ENCODE measurements at regions of chr7 and their contacts with region 1.

Region 1: GRCh38 chr7:154927624-154928143 is 75.2 kb downstream of the PAXIP1 start:
- DNase-seq: peak; percentile 88
- ATAC-seq: peak; percentile 69
- H3K4me3 Mint-ChIP-seq: peak overlapping the region; percentile 96
- H3K27ac Mint-ChIP-seq: peak overlapping the region; percentile 92
- H3K4me1 Mint-ChIP-seq: peaks cover 25% of the 10 kb centered on the region
- H3K27me3 Mint-ChIP-seq: peaks cover 6% of the 10 kb centered on the region

Region 2: DNA sequence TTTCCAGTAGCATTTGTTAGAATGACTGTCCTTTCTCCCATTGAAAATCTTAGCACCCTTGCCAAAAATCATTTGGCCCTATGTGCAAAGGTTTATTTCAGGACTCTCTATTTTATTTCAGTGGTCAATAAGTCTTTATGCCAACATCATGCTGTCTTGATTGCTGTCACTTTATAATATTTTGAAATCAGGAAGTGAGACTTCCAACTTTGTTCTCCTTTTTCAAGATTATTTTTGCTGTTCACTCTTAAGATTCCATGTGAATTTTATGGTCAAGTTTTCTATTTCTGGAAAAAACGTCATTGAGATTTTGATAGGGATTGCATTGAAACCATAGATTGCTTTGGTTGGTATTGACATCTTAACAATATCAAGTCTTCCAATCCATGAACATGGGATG is 10.2 kb after region 1 on chr7:
- CTCF ChIA-PET with region 1: interaction called, 32 read pairs
- POLR2A ChIA-PET with region 1: no interaction called
- DNase-seq: no peak
- ATAC-seq: no peak
- H3K4me3 Mint-ChIP-seq: no peak overlapping the region
- H3K27ac Mint-ChIP-seq: no peak overlapping the region
- H3K4me1 Mint-ChIP-seq: no peaks in the 10 kb centered on the region
- H3K27me3 Mint-ChIP-seq: no peaks in the 10 kb centered on the region

Region 3: GRCh38 chr7:155003376-155004214 is 75.9 kb after region 1 on chr7:
- CTCF ChIA-PET with region 1: interaction called, 13 read pairs
- POLR2A ChIA-PET with region 1: interaction called, 12 read pairs
- DNase-seq: peak; percentile 85
- ATAC-seq: peak; percentile 78
- H3K4me3 Mint-ChIP-seq: peak overlapping the region; percentile 88
- H3K27ac Mint-ChIP-seq: peak overlapping the region; percentile 91
- H3K4me1 Mint-ChIP-seq: peaks cover 11% of the 10 kb centered on the region
- H3K27me3 Mint-ChIP-seq: no peaks in the 10 kb centered on the region

Region 4: GRCh38 chr7:155093596-155093995 is 165.9 kb after region 1 on chr7:
- CTCF ChIA-PET with region 1: no interaction called
- POLR2A ChIA-PET with region 1: no interaction called
- DNase-seq: no peak
- ATAC-seq: no peak
- H3K4me3 Mint-ChIP-seq: no peak overlapping the region
- H3K27ac Mint-ChIP-seq: no peak overlapping the region
- H3K4me1 Mint-ChIP-seq: peaks cover 12% of the 10 kb centered on the region
- H3K27me3 Mint-ChIP-seq: peaks cover 5% of the 10 kb centered on the region

Region 5: DNA sequence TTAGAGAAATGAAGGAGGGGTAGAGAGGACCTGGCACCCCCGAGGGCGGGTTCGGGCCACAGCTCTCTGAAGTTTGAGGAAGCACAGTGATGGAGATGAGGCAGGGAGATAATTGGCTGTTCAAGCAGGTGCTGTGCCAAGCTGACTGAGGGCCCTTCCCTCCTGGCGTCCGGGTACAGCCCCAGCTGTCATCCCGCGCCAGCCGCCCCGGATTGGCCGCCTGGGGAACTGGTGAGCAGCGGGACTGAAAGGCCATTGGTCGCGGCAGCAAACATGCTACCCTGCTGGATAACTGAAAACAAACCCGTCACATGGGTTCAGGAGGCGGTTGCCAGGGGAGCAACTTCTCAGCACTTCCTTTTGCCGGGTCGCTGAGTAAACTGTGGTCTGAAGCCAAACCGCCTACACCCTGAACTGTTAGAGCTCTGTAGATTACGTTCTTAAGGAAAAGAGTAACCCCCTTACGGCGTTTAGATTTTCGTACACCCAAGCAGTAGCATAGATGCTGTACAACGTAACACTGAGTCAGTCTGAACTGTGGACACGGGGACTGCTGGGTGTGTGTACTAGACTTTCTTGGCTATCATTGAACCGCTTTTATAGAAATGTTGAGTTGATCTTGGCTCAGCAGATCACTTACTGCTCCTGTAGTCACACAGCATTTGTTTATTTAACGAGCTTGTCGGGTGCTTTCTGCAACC is 371.3 kb after region 1 on chr7:
- CTCF ChIA-PET with region 1: interaction called, 19 read pairs
- POLR2A ChIA-PET with region 1: interaction called, 14 read pairs
- DNase-seq: peak; percentile 98
- ATAC-seq: peak; percentile 78
- H3K4me3 Mint-ChIP-seq: peak overlapping the region; percentile 95
- H3K27ac Mint-ChIP-seq: peak overlapping the region; percentile 97
- H3K4me1 Mint-ChIP-seq: peaks cover 57% of the 10 kb centered on the region
- H3K27me3 Mint-ChIP-seq: peaks cover 3% of the 10 kb centered on the region

Region 6: GRCh38 chr7:155533827-155534690 is 606.4 kb after region 1 on chr7:
- CTCF ChIA-PET with region 1: interaction called, 10 read pairs
- POLR2A ChIA-PET with region 1: no interaction called
- DNase-seq: peak; percentile 49
- ATAC-seq: peak; percentile 65
- H3K4me3 Mint-ChIP-seq: peak overlapping the region; percentile 36
- H3K27ac Mint-ChIP-seq: no peak overlapping the region
- H3K4me1 Mint-ChIP-seq: peaks cover 10% of the 10 kb centered on the region
- H3K27me3 Mint-ChIP-seq: peaks cover 54% of the 10 kb centered on the region

Region 7: DNA sequence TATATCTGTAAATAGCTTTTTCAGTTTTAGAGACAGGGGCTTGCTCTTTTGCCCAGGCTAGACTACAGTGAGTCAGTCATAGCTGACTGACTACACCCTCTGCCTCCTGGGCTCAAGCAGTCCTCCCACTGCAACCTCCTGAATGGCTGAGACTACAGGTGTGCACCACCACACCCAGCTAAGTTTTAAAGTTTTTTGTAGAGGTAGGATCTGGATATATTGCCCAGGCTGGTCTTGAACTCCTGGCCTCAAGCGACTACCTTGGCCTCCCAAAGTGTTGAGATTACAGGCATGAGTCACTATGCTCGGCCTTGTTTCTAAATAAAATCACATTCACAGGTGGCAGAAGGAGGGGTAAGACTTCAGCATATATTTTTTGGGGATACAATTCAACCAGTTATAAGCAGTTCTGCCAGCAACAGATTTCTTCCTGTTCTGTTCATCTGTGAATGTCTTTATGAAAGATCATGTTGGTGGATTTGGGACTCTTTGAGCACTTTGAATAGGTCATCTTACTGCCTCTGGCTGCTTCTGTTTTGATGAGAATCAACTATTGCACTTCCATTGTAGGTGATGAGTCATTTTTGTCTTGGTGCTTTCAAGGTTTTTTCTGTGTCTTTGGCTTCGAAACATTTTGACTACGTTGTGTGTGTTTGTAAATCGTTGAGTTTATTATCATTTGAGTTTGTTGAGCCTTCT is 732.5 kb after region 1 on chr7:
- CTCF ChIA-PET with region 1: no interaction called
- POLR2A ChIA-PET with region 1: no interaction called
- DNase-seq: no peak
- ATAC-seq: no peak
- H3K4me3 Mint-ChIP-seq: no peak overlapping the region
- H3K27ac Mint-ChIP-seq: no peak overlapping the region
- H3K4me1 Mint-ChIP-seq: peaks cover 41% of the 10 kb centered on the region
- H3K27me3 Mint-ChIP-seq: no peaks in the 10 kb centered on the region